ENCODE measurements at regions of chr12 and their contacts with region 1.

Region 1: DNA sequence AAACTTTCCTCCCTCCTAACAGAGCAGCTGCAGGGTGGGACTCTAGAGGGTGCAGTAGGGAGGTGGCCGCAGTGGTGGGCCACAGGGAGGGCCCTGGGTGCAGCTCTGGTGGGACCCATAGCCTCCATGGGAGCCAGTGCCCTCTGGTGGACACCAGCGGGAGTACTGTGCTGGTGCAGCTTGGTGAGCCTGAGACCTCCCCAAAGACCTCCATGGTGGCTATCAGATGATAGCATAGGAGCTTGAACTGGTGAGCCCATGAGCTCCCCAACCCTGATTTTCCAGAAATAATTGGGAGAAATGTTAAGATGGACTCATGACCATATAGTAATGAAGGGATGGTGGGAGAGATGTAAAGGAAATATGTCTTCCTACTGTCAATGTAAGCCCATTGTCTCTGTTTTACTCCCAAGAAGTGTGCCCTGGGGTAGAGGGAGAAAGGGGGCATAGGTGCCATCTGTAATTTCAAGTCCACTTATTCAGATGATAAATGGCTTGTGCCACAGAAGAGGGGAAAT is 98.7 kb downstream of the GAS2L3 start:
- DNase-seq: peak; percentile 45
- CTCF ChIP-seq: peak; percentile 60

Region 2: DNA sequence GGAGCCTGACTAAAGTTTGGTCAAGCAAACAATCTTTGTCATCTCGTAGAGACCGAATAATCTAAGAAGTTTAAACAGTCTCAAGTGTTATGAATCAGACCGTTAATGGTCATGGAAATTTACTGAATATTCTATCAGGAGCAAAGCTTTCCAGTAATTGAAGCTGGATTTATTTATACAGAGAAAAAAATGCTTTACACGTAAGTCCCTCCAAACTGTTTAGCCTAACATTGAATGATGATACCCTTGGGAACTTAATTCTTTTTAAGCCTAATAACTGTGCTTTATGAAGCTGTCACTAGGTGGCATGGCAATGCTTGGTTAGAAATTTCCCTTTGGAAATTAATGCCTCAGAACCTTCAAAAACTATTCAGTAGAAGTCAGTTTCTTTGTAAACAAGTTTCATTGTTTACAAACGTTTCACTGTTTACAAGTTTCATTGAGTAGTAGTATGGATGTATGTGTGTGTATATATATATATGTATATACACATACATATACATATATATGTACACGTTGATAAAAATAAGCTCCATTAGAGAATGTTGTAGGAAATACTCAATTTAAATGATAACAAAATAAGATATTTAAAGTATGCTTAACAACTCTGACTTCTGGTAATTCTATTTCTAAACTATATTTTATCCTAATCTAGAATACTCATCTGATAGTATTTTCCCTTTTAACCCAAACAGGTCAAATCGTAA is 437.4 kb before region 1 on chr12:
- CTCF ChIA-PET with region 1: interaction called, 12 read pairs
- POLR2A ChIA-PET with region 1: no interaction called
- DNase-seq: peak; percentile 30
- CTCF ChIP-seq: peak; percentile 82

Region 3: GRCh38 chr12:100375038-100375735 is 296.9 kb before region 1 on chr12:
- CTCF ChIA-PET with region 1: interaction called, 10 read pairs
- POLR2A ChIA-PET with region 1: no interaction called
- DNase-seq: no peak
- CTCF ChIP-seq: no peak

Region 4: DNA sequence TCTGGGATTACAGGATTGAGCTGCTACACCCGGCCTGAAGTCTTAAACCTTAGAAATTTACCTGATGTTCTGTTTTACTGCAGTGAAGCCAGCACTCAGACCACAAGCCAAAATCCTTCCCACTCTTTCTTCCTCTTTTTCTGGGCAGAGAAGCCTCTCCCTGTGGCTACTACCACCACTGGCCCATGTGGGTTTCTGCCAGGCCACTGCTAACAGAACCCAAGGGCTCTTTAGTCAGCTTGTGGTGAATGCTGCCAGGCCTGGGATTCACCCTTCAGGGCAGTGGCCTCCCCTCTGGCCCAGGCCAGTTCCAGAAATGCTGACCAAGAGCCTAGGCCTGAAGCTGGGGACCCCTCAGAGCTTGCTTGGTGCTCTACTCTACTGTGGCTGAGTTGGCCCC is 63.4 kb before region 1 on chr12:
- CTCF ChIA-PET with region 1: no interaction called
- POLR2A ChIA-PET with region 1: no interaction called
- DNase-seq: no peak
- CTCF ChIP-seq: no peak

Region 5: DNA sequence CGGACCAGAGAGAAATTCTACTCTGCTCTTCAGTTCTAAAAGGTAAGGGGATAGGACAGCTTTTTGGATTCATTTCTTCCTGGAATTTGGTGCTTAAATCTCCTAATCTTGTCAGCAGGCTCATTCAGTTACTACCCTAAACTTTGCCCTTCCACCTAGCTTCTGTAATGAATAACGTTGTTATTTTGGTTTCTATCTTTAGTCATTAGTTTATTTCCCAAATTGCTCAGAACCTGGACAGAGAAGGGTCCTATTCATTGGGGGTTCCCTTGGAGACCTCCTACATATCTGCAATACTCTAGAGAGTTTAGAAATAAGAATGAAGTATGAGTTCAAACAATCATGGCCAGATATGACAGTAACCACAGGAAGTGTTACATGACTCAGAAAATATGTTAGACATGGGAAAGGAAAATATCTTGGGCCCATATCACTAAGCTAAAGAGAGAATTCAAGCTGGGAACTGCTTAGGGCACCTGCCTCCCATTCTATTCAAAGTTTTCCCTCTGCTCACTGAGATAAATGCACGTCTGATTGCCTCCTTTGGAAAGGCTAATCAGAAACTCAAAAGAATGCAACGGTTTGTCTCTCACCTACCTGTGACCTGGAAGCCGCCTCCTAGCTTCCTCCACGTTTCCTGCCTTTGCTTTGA is 10.7 kb before region 1 on chr12:
- CTCF ChIA-PET with region 1: interaction called, 37 read pairs
- POLR2A ChIA-PET with region 1: no interaction called
- DNase-seq: no peak
- CTCF ChIP-seq: no peak

Region 6: DNA sequence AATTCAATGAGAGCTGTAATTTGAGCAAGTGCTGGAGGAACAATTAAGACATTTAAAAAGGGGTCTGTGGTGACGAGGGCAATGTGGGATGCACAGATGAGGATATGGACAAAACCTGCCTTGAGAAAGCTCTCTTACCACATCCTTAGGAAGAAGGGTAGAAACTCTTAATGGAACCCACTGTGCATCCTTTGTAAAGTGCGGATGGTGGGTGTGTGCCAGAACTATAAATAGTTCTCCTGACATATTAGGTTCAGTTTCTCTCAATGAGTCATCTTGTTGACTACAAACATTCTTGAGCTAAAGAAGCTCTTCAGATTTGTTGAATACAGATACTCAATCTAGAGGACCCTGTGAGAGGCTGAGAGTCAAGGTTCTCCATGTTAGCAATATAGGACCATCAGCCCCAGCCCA is 16.3 kb after region 1 on chr12:
- CTCF ChIA-PET with region 1: interaction called, 35 read pairs
- POLR2A ChIA-PET with region 1: no interaction called
- DNase-seq: no peak
- CTCF ChIP-seq: no peak

Region 7: DNA sequence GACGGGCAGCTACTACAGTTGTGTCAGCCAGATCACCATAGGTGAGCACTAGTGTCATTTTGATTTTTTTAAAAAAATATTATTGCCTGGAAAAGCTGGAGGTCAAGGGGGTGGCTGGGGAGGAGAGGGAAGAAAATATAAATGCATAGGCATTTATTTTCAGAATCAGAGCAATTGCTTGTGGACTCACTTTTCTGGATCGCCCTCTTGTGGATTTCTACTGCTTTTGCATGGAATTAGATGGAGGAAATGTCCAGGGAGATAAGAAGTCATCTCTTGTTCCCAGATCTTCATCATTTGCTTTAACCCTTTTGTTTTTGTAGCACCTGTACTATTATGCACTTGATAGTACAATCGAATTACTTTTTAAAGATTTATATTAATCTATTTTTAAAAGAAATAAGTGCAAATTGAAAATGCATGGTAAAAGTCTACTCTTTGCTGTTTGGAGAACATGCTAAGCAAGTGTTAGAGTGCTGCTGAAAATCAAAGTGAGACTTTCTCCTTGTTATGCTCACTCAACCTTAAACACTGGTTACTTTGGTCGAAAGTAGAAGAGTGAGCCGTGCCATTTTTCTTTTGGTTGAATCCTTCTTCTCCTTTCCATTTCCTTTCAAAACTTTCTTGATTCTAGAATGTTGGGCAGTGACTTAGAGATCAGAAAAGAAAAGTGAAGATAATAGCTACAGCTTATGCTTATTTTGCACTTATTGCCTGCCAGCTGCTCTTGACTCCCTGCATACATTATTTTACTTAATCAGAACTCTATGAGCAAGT is 61.9 kb after region 1 on chr12:
- CTCF ChIA-PET with region 1: interaction called, 25 read pairs
- POLR2A ChIA-PET with region 1: no interaction called
- DNase-seq: no peak
- CTCF ChIP-seq: peak; percentile 3

Region 8: DNA sequence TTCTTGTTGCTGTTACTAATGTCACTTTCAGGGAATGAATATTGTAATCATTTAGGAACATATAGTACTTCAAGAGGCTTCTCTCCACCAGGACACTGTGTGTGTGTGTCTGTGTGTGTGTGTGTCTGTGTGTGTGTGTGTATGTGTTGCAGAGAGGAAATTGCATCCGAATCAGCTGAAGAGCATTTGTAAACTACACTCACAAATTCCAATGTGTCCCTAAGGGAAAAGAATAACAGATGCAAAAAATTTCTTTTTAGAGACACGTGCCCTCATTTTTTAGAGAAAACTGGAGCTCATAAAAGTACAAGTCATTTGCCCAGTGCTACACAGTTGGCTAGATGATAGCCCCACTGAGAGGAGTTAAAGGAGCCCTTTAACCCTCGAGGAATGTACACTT is 291.2 kb after region 1 on chr12:
- CTCF ChIA-PET with region 1: no interaction called
- POLR2A ChIA-PET with region 1: no interaction called
- DNase-seq: no peak
- CTCF ChIP-seq: no peak